CD8-positive, alpha-beta T cell (primary cell): ENCODE measurements at regions of chr3 and their contacts with region 1.

Region 1: GRCh38 chr3:143951351-143951971 is 20.2 kb upstream of the DIPK2A start:
- DNase-seq: peak in 4 of 9 experiments; percentile 9 to 60 (median 38)
- ATAC-seq: no peak
- H3K4me3 ChIP-seq: no peak overlapping the region
- H3K4me3 Mint-ChIP-seq: no peak overlapping the region
- H3K27ac ChIP-seq: no peak overlapping the region
- H3K27ac Mint-ChIP-seq: no peak overlapping the region
- H3K4me1 ChIP-seq: no peaks in the 10 kb centered on the region
- H3K4me1 Mint-ChIP-seq: peaks cover 3% of the 10 kb centered on the region
- H3K27me3 ChIP-seq: no peaks in the 10 kb centered on the region
- H3K27me3 Mint-ChIP-seq: peaks cover 5% of the 10 kb centered on the region
- CTCF ChIP-seq: peak; percentile 67

Region 2: DNA sequence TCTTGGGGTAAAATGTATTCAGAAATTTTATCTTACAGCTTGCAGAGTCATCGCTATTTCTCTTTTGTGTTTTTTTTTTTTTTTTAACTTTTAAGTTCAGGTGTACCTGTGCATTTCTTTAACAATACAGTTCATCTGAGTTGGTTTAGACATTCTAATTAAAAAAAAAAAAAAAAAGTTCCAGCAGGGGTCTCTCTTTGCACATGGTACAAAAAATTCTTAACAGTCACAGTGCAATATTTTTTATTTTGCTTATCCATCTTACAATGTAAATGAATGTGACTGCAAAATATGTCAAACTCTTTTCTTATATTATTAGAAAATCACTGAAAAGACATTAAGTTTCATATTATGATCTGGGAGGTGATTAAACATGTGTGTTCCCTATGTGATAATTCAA is 55.7 kb before region 1 on chr3:
- CTCF ChIA-PET with region 1: interaction called, 3 read pairs
- POLR2A ChIA-PET with region 1: no interaction called
- intact Hi-C with region 1: loop called in 1 of 2 experiments (anchors 5 kb)
- DNase-seq: peak in 1 of 9 experiments; percentile 4
- ATAC-seq: no peak
- H3K4me3 ChIP-seq: no peak overlapping the region
- H3K4me3 Mint-ChIP-seq: no peak overlapping the region
- H3K27ac ChIP-seq: no peak overlapping the region
- H3K27ac Mint-ChIP-seq: no peak overlapping the region
- H3K4me1 ChIP-seq: no peaks in the 10 kb centered on the region
- H3K4me1 Mint-ChIP-seq: no peaks in the 10 kb centered on the region
- H3K27me3 ChIP-seq: no peaks in the 10 kb centered on the region
- H3K27me3 Mint-ChIP-seq: peaks cover 17% of the 10 kb centered on the region
- CTCF ChIP-seq: no peak

Region 3: DNA sequence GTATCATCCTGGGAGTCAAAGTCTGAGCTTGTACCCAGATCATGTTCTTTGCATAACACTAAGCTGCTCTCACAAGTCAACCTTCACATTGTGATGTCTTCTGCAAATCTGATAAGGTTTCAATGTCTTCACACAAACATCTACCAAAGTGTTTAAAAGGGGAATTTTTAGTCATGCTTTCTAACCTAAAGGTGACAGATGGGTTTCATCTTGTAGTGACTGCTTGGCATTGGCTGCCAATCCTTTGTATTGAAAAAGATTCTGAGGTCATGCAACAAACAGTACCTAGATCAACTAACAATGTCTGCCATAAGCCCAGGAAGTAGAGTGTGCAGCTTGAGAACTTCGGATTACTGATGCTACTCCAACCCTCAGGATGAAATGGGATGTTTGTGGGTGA is 23.4 kb before region 1 on chr3:
- CTCF ChIA-PET with region 1: no interaction called
- POLR2A ChIA-PET with region 1: no interaction called
- intact Hi-C with region 1: no loop called
- DNase-seq: no peak
- ATAC-seq: no peak
- H3K4me3 ChIP-seq: no peak overlapping the region
- H3K4me3 Mint-ChIP-seq: no peak overlapping the region
- H3K27ac ChIP-seq: no peak overlapping the region
- H3K27ac Mint-ChIP-seq: no peak overlapping the region
- H3K4me1 ChIP-seq: no peaks in the 10 kb centered on the region
- H3K4me1 Mint-ChIP-seq: peaks cover 2% of the 10 kb centered on the region
- H3K27me3 ChIP-seq: no peaks in the 10 kb centered on the region
- H3K27me3 Mint-ChIP-seq: peaks cover 7% of the 10 kb centered on the region
- CTCF ChIP-seq: no peak